ENCODE measurements at regions of chr15 and their contacts with region 1.

Region 1: DNA sequence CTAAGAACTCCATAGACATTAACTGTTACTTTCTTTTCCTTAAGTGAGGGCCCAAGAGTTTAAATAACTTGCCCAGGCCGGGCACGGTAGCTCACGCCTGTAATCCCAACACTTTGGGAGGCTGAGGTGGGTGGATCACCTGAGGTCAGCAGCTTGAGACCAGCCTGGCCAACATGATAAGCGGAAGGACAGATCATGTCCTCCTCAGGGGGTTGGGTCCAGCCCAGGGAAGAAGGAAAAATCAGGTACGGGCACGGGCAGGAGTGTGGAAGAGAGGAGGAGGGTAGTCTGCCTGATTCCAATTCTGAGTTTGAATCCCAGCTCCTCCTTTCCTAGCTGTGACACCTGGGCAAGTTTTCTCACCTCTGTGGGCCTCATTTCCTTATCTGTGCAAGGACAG is 118.8 kb downstream of the ANP32A start:
- DNase-seq: no peak
- ATAC-seq: no peak
- H3K4me3 ChIP-seq: no peak overlapping the region
- H3K27ac ChIP-seq: no peak overlapping the region
- H3K4me1 ChIP-seq: no peaks in the 10 kb centered on the region
- H3K27me3 ChIP-seq: peaks cover 0 to 1% of the 10 kb centered on the region in 2 experiments; a peak in 2 of 4 replicates
- CTCF ChIP-seq: no peak
- EP300 ChIP-seq: no peak
- POLR2A ChIP-seq: no peak
- RAD21 ChIP-seq: no peak

Region 2: GRCh38 chr15:68666120-68666811 is 35.6 kb before region 1 on chr15:
- CTCF ChIA-PET with region 1: no interaction called
- POLR2A ChIA-PET with region 1: no interaction called
- RAD21 ChIA-PET with region 1: no interaction called
- SMC1A ChIA-PET with region 1: no interaction called
- in situ Hi-C with region 1: no loop called
- intact Hi-C with region 1: loop called (anchors 1 kb)
- DNase-seq: no peak
- ATAC-seq: no peak; the same call in 2 of the 3 replicates
- H3K4me3 ChIP-seq: no peak overlapping the region
- H3K27ac ChIP-seq: no peak overlapping the region
- H3K4me1 ChIP-seq: no peaks in the 10 kb centered on the region
- H3K27me3 ChIP-seq: no peaks in the 10 kb centered on the region; a peak in 1 of 4 replicates
- CTCF ChIP-seq: no peak
- EP300 ChIP-seq: no peak
- POLR2A ChIP-seq: no peak
- RAD21 ChIP-seq: no peak

Region 3: GRCh38 chr15:68775671-68776476 is 74.0 kb after region 1 on chr15:
- CTCF ChIA-PET with region 1: no interaction called
- POLR2A ChIA-PET with region 1: no interaction called
- RAD21 ChIA-PET with region 1: no interaction called
- SMC1A ChIA-PET with region 1: no interaction called
- in situ Hi-C with region 1: no loop called
- intact Hi-C with region 1: no loop called
- DNase-seq: no peak
- ATAC-seq: no peak
- H3K4me3 ChIP-seq: no peak overlapping the region
- H3K27ac ChIP-seq: no peak overlapping the region
- H3K4me1 ChIP-seq: no peaks in the 10 kb centered on the region
- H3K27me3 ChIP-seq: no peaks in the 10 kb centered on the region
- CTCF ChIP-seq: no peak
- EP300 ChIP-seq: no peak
- POLR2A ChIP-seq: no peak
- RAD21 ChIP-seq: no peak